Caco-2 (cell line): ENCODE measurements at regions of chr12 and their contacts with region 1.

Region 1: DNA sequence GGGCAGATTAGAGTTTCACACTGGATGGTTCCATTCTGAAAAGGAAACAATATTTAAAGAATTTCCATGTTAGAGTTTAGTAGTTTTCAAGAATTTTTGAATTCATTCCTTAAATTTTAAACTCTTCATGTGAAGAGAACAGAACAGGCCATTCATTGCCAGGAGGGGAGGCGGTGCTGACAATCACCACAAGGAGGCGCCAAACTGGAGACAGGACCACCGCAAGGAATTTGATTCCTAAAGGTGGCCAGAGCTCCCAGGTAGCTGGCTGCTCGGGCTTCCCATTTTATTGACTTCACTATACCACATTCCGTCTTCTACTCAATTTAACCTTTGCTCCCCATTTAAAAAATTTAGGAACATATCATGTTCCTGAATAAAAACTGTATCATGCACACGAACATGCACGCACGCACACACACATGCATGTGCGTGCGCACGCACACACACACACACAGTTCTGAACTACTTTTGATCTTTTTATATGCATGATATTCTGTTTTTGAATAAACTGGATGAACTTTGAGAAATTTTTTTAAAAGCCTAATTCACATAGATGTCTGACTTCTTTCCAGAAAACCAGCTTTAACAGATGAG is 101.2 kb downstream of the NELL2 start:
- DNase-seq: peak; percentile 53 to 74
- H3K4me3 ChIP-seq: no peak overlapping the region
- H3K4me3 Mint-ChIP-seq: no peak overlapping the region
- H3K27ac Mint-ChIP-seq: no peak overlapping the region
- H3K4me1 ChIP-seq: no peaks in the 10 kb centered on the region
- H3K4me1 Mint-ChIP-seq: no peaks in the 10 kb centered on the region
- H3K27me3 ChIP-seq: no peaks in the 10 kb centered on the region; the same call in 1 of the 2 replicates
- H3K27me3 Mint-ChIP-seq: peaks cover 1% of the 10 kb centered on the region
- CTCF ChIP-seq: peak; percentile 89 to 93

Region 2: GRCh38 chr12:44157359-44157758 is 617.6 kb before region 1 on chr12:
- CTCF ChIA-PET with region 1: no interaction called
- POLR2A ChIA-PET with region 1: no interaction called
- intact Hi-C with region 1: no loop called
- DNase-seq: no peak
- H3K4me3 ChIP-seq: no peak overlapping the region
- H3K4me3 Mint-ChIP-seq: no peak overlapping the region
- H3K27ac Mint-ChIP-seq: no peak overlapping the region
- H3K4me1 ChIP-seq: no peaks in the 10 kb centered on the region
- H3K4me1 Mint-ChIP-seq: peaks cover 6% of the 10 kb centered on the region
- H3K27me3 ChIP-seq: no peaks in the 10 kb centered on the region
- H3K27me3 Mint-ChIP-seq: no peaks in the 10 kb centered on the region
- CTCF ChIP-seq: no peak

Region 3: GRCh38 chr12:44875954-44876553 is 101.1 kb after region 1 on chr12 and contains the start of gene NELL2:
- CTCF ChIA-PET with region 1: interaction called, 6 read pairs
- POLR2A ChIA-PET with region 1: no interaction called
- intact Hi-C with region 1: loop called (anchors 5 kb)
- DNase-seq: peak; percentile 45 to 59
- H3K4me3 ChIP-seq: peak within 1 kb of the TSS; percentile 36
- H3K4me3 Mint-ChIP-seq: peak within 1 kb of the TSS; percentile 72
- H3K27ac Mint-ChIP-seq: no peak within 1 kb of the TSS
- H3K4me1 ChIP-seq: no peaks in the 10 kb centered on the region; the same call in none of the 2 replicates
- H3K4me1 Mint-ChIP-seq: peaks cover 19% of the 10 kb centered on the region
- H3K27me3 ChIP-seq: peaks cover 10% of the 10 kb centered on the region
- H3K27me3 Mint-ChIP-seq: peaks cover 23% of the 10 kb centered on the region
- CTCF ChIP-seq: no peak
- total RNA-seq, gene NELL2: 0.70 and 0.81 TPM in 2 replicates